Activated naive CD4-positive, alpha-beta T cell treated with anti-CD3 and anti-CD28 coated beads for 36 hours (primary cell): ENCODE measurements at regions of chrX and their contacts with region 1.

Region 1: DNA sequence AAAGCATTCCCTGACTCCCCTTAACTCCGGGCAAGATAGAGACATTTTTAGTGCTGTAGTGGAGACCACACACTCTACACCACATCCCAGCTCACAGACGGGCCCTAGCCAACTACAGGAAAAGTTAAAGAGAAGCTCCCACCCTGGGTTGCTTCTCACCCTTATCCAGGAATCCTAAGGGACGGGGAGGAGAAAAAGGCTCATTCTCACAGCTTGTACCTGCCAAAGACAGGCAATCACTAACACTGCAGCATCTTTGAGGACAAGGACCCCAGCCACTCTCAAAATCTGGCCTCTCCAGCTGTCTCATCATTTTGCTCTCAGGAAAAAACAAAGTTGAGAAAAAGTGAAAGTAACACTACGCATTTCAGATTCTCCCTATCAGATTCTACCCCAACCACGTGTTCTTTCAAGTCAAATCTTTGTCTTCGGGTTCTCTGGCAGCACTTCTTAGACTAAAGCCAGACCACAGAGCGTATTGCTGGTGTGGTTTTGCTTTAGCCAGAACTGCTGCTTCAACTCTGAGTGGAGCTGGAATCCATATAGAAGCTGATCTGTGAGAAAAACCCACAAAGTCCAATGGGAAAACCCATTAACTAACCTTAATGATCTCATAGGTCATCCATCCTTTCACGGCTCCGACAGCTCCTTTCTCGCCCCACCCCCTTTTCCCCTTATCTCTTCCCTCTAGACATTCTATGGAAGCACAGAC is 605.9 kb upstream of the DIPK2B start:
- DNase-seq: peak; percentile 66
- H3K4me3 Mint-ChIP-seq: peak overlapping the region; percentile 55
- H3K27ac Mint-ChIP-seq: peak overlapping the region; percentile 94
- H3K4me1 Mint-ChIP-seq: peaks cover 86% of the 10 kb centered on the region
- H3K27me3 Mint-ChIP-seq: no peaks in the 10 kb centered on the region

Region 2: GRCh38 chrX:45186643-45187026 is 619.9 kb before region 1 on chrX:
- CTCF ChIA-PET with region 1: no interaction called
- intact Hi-C with region 1: loop called (anchors 5 kb)
- DNase-seq: no peak
- H3K4me3 Mint-ChIP-seq: peak overlapping the region; percentile 77
- H3K27ac Mint-ChIP-seq: no peak overlapping the region
- H3K4me1 Mint-ChIP-seq: peaks cover 33% of the 10 kb centered on the region
- H3K27me3 Mint-ChIP-seq: no peaks in the 10 kb centered on the region

Region 3: DNA sequence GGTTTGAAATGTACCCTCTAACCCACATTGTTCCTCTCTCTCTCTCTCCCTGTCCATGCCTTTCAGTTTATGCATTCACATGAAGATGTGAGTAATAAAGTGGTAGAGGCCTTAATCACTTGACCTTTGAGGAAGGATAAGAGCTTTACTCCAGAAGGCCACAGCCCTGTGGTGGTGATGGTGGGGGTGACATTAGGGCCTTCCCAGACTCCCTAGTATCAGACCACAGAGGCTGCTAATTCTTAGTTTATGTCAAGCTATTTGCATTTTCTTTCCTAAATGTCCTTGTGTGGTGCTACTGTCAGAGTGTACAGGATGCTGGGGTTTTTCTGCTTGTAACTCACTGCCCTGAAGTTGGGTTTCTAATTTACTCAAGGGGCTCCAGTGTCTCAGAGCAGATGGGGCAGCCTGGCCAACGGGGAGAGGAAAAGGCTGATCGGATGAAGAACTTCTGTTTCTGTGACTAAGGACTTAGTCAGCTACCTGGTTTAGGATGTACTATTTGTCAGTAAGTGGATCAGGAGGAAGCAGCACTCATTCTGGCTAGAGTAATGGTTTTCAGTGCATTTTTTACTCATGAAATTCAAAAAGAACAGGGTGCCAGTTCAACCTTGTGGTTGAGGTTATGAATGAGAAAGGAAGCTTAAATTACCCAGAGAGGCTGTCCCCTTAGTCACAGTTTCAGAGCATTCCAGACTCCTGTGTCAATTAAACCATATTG is 96.3 kb before region 1 on chrX:
- CTCF ChIA-PET with region 1: interaction called, 3 read pairs
- intact Hi-C with region 1: loop called (anchors 1 kb)
- DNase-seq: peak; percentile 71
- H3K4me3 Mint-ChIP-seq: no peak overlapping the region
- H3K27ac Mint-ChIP-seq: peak overlapping the region; percentile 69
- H3K4me1 Mint-ChIP-seq: peaks cover 42% of the 10 kb centered on the region
- H3K27me3 Mint-ChIP-seq: no peaks in the 10 kb centered on the region

Region 4: DNA sequence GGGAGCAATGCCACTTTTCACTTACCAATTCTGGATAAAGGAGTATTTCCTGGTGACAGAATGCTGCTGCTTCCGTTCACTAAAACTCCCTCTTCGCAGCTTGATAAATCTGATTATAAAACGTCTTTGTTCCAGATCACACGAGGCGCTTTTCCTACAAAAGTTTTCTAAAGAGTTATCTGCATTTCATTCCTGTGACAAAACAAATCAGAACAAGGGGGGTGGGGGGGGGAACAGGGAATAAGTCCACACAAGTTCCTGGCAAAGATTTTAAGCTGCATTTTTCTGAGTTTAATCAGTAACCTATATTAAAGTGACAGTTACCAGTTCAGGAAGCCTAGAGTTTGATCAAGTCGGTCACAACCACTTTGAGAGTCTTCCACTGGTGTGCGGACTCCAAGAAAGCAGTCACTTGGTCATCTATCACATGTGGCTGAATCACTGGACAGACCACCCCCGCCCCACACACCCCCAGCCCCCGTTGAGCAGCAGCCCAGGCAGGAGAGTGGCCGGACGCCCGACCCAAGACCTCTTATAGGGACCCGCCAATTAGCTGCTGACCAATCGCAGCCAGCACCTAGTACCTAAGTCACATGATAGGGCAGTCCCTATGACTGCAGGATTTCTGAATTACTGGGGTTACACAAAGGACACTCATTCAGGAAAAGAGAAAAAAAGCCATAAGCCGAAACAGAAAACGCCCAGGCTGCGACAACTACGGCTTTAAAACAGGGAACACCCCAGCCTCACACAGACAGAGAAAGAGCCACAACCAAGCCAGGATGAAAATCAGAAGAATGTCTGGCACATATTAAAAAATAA is 36.6 kb before region 1 on chrX:
- CTCF ChIA-PET with region 1: interaction called, 5 read pairs
- intact Hi-C with region 1: loop called (anchors 1 kb)
- DNase-seq: peak; percentile 58
- H3K4me3 Mint-ChIP-seq: peak overlapping the region; percentile 79
- H3K27ac Mint-ChIP-seq: peak overlapping the region; percentile 91
- H3K4me1 Mint-ChIP-seq: peaks cover 46% of the 10 kb centered on the region
- H3K27me3 Mint-ChIP-seq: no peaks in the 10 kb centered on the region

Region 5: GRCh38 chrX:45824471-45824870 is 17.9 kb after region 1 on chrX:
- CTCF ChIA-PET with region 1: interaction called, 3 read pairs
- intact Hi-C with region 1: loop called (anchors 1 kb)
- DNase-seq: peak; percentile 61
- H3K4me3 Mint-ChIP-seq: no peak overlapping the region
- H3K27ac Mint-ChIP-seq: peak overlapping the region; percentile 87
- H3K4me1 Mint-ChIP-seq: peaks cover 52% of the 10 kb centered on the region
- H3K27me3 Mint-ChIP-seq: no peaks in the 10 kb centered on the region

Region 6: GRCh38 chrX:46573331-46573891 is 766.8 kb after region 1 on chrX and contains the start of gene CHST7:
- CTCF ChIA-PET with region 1: no interaction called
- intact Hi-C with region 1: loop called (anchors 5 kb)
- DNase-seq: peak; percentile 46
- H3K4me3 Mint-ChIP-seq: peak within 1 kb of the TSS; percentile 69
- H3K27ac Mint-ChIP-seq: peak within 1 kb of the TSS; percentile 89
- H3K4me1 Mint-ChIP-seq: peaks cover 39% of the 10 kb centered on the region
- H3K27me3 Mint-ChIP-seq: peaks cover 2% of the 10 kb centered on the region
- total RNA-seq, gene CHST7: 0.79 to 0.99 TPM